ENCODE measurements at regions of chr1 and their contacts with region 1.

Region 1: DNA sequence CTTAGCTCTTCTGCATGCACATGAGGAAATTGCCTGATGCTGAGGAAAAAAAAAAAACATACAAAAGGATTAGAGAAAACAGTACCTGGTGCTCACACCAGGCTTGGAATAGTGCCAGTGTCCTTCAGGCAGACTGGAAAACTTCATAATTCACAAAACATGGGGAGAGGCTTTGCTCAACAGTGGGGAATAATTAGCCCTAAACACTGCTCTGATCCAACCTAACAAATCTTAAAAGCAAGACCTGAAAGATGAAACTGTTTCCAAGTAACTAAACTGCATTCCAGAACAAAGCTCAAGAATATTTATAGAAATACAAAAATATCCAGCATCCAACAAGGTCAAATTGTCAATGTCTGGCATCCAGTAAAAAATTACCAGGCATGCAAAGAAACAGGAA is 124.8 kb downstream of the AK5 start:
- DNase-seq: no peak
- ATAC-seq: no peak
- H3K4me3 ChIP-seq: no peak overlapping the region
- H3K27ac ChIP-seq: no peak overlapping the region
- H3K4me1 ChIP-seq: no peaks in the 10 kb centered on the region
- H3K27me3 ChIP-seq: no peaks in the 10 kb centered on the region
- CTCF ChIP-seq: no peak
- EP300 ChIP-seq: no peak
- POLR2A ChIP-seq: no peak
- RAD21 ChIP-seq: no peak

Region 2: GRCh38 chr1:77459881-77460280 is 53.2 kb after region 1 on chr1:
- CTCF ChIA-PET with region 1: no interaction called
- POLR2A ChIA-PET with region 1: no interaction called
- in situ Hi-C with region 1: no loop called
- intact Hi-C with region 1: loop called (anchors 5 kb)
- DNase-seq: no peak
- ATAC-seq: no peak
- H3K4me3 ChIP-seq: no peak overlapping the region
- H3K27ac ChIP-seq: no peak overlapping the region
- H3K4me1 ChIP-seq: no peaks in the 10 kb centered on the region
- H3K27me3 ChIP-seq: no peaks in the 10 kb centered on the region
- CTCF ChIP-seq: no peak
- EP300 ChIP-seq: no peak
- POLR2A ChIP-seq: no peak
- RAD21 ChIP-seq: no peak

Measured in K562 (cell line).